Left cardiac atrium (tissue), 4 donors: ENCODE measurements at regions of chrX and their contacts with region 1.

Region 1: DNA sequence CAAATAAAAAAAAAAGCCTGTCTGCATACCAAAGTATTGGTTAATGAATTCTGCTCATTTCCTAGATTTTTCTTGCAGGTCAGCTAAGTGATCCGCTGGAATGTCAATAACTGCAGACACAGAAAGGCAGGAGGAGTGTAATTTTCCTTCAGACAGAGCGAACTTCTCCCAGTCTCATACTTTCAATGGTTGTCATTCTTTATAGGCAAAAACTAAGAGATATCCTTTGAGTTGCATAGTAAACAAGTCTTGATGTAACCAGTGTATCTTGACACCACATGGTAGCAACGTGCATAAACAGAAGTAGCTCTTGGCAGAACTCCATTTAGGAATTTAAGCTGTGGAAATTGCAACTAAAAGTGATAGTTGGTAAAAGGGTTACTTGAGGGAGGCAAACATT is 8.2 kb downstream of the CAPN6 start:
- DNase-seq: no peak
- ATAC-seq: no peak

Region 2: DNA sequence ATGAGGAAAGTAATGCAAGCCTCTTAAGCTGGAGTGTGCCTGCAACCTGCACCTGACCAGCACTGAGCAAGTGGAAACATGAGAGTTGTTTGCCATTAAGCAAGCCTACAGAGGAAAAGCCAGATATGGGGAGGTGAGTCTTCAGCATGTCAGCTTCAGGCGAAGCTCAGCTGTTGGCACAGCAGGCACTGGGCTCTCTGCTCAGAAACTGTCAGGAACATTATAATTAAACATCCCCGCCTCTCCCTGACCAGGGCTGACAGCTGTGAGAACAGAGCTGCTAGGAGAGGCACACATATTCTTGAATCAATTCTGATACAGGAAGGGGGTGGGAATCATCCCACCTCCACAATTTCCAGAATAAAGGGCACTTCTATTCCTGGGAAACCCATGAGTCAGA is 168.9 kb after region 1 on chrX:
- intact Hi-C with region 1: loop called in 1 of 2 experiments (anchors 10 kb)
- DNase-seq: no peak
- ATAC-seq: no peak

Region 3: GRCh38 chrX:111445486-111445885 is 183.4 kb after region 1 on chrX:
- intact Hi-C with region 1: loop called in 1 of 2 experiments (anchors 10 kb)
- DNase-seq: no peak
- ATAC-seq: no peak